Posterior cingulate gyrus (tissue), 11 donors: ENCODE measurements at regions of chr12 and their contacts with region 1.

Region 1: DNA sequence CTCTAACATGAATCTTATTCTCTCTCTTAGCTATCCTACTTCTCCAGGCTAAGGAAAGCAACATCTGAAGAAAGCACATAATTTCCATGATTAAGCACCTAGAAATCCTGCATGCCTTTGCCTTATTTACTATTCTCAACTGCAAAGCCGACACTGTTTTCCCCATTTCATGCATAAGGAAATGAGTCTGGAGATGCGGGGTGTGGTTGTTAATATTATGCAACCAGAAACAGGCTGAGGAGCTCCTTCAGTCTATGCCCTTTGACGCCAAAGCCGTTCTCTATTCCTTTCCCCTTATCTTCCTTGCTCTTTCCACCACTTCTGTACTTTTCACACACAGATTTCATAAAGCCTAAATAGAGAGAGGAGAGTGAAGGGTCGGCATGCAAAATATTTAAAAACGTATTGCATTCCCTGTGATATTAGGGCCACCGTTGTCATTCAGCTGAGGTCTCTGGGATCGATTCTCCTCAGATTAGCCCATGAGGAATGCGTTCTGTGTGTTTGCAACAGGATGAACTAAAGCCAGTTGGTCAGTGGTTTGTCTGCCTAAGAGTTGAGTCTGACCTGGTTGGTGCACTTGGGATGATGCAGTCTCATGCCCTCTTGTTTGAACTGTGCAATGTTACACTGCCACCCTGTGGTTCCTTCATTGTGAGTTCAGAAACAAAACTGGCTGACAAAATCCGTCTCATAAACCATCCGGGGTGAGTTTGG is 53.1 kb upstream of the PLEKHG7 start:
- DNase-seq: peak in 6 of 10 donors; percentile 24 to 84 (median 44)

Region 2: GRCh38 chr12:91361864-91362263 is 1287.8 kb before region 1 on chr12:
- intact Hi-C with region 1: loop called (anchors 5 kb)
- DNase-seq: no peak

Region 3: DNA sequence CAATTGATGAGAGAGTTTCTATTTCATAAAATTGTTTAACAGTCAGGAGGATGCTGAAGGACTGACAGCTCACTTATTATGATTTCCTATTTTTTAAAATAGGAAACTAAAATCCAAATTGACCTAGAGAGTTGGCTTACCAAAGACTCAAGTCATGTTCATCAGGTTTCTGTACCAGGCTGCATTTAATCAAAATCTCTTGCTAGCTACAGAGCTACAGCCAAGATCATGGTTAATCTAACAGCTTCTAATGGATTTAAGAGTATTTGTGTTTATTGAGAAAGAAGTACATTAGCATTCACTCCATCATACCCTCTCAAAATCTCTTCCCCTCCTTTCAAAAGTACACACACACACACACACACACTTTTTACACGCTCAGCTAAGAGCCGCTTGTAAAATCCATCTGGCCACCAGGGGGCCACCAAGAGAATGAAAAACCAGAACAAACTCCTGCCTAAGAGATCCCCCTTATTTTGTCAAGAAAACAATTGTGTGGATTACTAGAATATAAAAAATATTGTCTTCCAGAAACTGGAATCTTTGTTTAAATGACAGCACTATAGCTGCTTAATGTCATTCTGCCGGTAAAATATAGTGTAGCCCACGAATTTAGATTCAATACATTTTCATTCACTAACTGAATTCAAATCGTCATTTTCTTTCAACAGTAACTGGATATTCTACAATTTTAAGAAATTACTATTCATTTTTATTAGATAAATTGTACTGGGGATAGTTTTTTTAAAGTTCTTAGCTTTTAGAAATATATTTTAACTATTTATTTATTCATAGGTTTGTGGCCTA is 838.0 kb before region 1 on chr12:
- intact Hi-C with region 1: loop called (anchors 5 kb)
- DNase-seq: peak in 9 of 10 donors; percentile 25 to 90 (median 73)

Region 4: DNA sequence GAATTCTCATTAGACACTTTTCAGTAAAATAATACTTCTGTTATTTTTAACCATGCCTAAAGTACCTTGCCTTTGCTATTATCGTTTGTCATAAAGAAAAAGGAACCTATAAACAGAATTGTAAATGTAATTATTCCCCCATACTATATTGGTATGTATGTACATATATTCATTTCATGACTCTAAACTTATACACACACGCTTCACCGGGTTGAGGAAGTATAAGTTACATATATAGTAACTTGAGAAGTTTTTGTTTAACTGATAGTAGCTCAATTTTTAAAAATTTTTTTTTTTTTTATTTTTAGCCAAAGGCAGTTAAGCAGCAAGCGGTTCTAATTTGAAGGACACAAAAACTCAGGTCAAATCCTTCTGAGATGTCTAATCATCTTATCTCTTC is 160.7 kb after region 1 on chr12:
- intact Hi-C with region 1: no loop called
- DNase-seq: no peak